BJ (cell line): ENCODE measurements at regions of chr1 and their contacts with region 1.

Region 1: GRCh38 chr1:25037174-25038074 is 107.3 kb upstream of the RUNX3 start:
- DNase-seq: no peak
- H3K4me3 ChIP-seq: no peak overlapping the region
- H3K27me3 ChIP-seq: peaks cover 7% of the 10 kb centered on the region
- CTCF ChIP-seq: peak; percentile 69

Region 2: GRCh38 chr1:24930204-24931145 is 106.9 kb before region 1 on chr1 and contains the start of gene RUNX3:
- CTCF ChIA-PET with region 1: interaction called, 146 read pairs
- POLR2A ChIA-PET with region 1: no interaction called
- DNase-seq: no peak
- H3K4me3 ChIP-seq: peak within 1 kb of the TSS; percentile 44
- H3K27me3 ChIP-seq: peaks cover 52% of the 10 kb centered on the region
- CTCF ChIP-seq: no peak
- polyA plus RNA-seq, gene RUNX3: 0.23 and 0.54 TPM in 2 replicates

Region 3: DNA sequence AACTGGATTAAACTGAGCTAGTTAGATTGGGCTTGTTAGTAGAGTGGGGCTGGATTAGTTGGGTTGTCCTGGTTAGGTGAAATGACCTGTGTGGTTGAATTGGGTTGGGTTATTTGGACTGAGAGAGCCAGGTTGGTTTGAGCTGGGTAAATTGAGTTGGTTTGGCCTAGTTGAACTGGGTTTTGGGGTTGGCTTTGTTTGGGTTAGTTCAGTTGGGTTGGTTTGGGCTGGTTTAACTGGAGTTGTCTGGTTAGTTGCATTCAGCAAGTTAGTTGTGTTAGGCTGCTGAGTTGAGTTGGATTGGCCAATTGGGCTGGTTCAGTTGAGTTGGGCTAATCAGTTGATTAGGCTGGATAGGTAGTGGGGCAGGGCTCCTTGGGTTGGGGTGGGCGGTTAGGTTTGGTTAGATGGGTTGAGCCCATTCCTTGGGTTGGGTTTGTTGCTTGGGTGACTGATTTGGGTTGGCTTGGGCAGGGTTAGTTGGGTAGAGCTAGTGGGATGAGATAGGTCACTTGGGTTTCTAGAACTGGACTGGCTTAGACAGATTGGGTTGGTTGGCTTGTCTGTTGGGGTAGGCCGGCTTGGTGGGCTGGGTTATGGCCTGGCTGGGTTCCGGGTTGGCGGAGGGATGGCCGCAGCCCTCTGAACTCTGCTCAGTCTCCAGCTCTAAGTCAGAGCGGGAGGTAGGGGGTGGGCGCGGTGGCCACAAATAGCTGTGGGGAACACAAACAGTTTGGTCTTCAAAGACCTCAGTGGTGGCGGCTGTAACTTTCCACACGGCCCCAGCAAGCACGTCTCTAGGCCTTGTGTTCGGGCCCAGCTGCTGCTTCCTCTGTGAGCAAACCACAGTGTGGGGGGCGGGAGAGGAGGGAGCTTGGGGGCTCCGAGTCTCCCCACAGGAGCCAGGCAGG is 40.2 kb before region 1 on chr1:
- CTCF ChIA-PET with region 1: interaction called, 12 read pairs
- POLR2A ChIA-PET with region 1: no interaction called
- DNase-seq: no peak
- H3K4me3 ChIP-seq: no peak overlapping the region
- H3K27me3 ChIP-seq: peaks cover 5% of the 10 kb centered on the region
- CTCF ChIP-seq: no peak

Region 4: GRCh38 chr1:25022361-25023189 is 14.8 kb before region 1 on chr1:
- CTCF ChIA-PET with region 1: interaction called, 40 read pairs
- POLR2A ChIA-PET with region 1: interaction called, 3 read pairs
- DNase-seq: peak; percentile 87
- H3K4me3 ChIP-seq: no peak overlapping the region
- H3K27me3 ChIP-seq: peaks cover 1% of the 10 kb centered on the region; the same call in 1 of the 2 replicates
- CTCF ChIP-seq: no peak

Region 5: DNA sequence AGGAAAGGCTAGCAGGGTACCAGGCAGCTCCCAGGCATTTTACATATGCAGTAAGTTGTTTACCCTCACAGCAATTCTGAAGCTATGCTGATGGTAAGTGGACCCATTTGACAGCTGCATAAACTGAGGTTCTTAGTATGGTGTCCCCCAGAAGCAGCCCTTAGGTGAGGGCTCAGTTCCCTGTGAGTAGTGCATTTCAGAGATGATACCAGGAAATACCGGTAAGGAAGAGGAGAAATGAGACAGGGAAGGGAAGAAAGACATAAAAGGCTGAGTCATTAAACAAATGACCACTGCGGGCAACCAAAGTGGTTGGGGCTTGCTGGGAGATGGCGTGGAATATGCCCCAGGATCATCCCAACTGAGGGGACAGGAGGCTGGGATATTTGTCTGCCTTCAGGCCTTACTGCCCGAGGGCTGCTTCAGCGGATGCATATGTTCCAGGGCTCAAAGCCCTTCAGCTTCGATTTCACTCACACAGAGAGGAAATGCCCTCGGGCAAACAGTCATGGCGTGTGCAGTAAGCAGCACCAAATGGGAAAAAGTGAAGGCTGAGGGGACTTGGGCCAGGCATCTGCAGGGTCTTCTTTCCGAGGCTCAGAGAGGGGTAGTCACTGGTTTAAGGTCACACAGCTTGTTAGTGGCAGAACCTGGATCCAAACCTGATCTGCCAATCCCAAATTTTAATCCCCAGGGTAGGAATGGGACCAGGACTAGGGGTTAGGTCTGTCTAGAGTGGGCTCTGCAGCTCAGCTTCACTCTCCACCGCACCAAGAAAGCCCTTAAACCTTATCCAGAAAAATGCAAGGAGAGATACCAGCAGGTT is 26.4 kb after region 1 on chr1:
- CTCF ChIA-PET with region 1: interaction called, 10 read pairs
- POLR2A ChIA-PET with region 1: no interaction called
- DNase-seq: no peak
- H3K4me3 ChIP-seq: no peak overlapping the region
- H3K27me3 ChIP-seq: peaks cover 16% of the 10 kb centered on the region
- CTCF ChIP-seq: no peak

Region 6: GRCh38 chr1:26021647-26022403 is 984.4 kb after region 1 on chr1 and contains the start of gene EXTL1:
- CTCF ChIA-PET with region 1: no interaction called
- POLR2A ChIA-PET with region 1: no interaction called
- DNase-seq: no peak
- H3K4me3 ChIP-seq: peak within 1 kb of the TSS; percentile 39
- H3K27me3 ChIP-seq: no peaks in the 10 kb centered on the region
- CTCF ChIP-seq: no peak
- polyA plus RNA-seq, gene EXTL1: 3.6 and 5.0 TPM in 2 replicates